ENCODE measurements at regions of chr2 and their contacts with region 1.

Region 1: DNA sequence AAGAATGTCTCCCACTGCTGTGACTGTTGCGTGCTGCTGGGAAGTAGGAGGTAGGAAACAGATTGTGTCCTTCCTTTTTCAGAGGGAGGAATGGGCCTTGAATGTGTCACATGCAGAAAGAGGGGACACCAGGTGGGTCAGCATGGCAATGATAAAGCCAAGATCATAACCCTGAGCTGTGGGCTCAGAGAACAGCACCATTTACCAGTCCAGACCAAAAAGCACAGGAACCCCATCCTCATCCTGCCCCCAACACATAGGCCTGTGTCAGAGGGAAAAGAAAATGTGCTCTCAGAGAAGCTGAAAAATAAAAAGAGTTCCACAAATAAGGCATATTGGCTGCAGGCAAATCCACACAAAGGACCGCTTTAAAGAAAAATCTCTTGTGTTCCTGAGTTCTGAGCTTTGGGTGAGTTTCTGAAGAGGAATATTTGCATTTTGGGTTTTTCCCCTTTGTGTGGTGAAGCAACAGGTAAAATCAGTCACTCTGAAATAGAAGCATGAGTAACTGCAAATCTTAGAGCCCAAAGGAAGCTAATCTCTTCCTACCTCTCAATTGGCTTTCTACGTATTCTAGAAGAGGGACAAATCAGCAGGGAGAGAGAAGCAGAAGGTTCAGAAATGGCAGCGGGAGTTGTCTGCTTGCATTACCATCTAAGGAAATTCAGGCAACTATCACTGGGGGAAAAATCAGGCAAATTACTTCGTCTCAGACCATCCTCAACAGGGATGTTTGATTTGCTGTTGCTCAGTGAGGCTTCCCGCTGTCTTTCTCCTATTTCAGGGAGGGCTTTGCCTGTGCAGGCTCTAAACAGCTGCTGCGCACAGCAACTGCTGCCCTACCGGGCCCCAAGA is 106.8 kb downstream of the BCL11A start:
- DNase-seq: no peak
- ATAC-seq: peak; percentile 78
- H3K4me3 Mint-ChIP-seq: peak overlapping the region; percentile 78
- H3K27ac Mint-ChIP-seq: peak overlapping the region; percentile 98
- H3K4me1 Mint-ChIP-seq: peaks cover 90% of the 10 kb centered on the region
- H3K27me3 Mint-ChIP-seq: no peaks in the 10 kb centered on the region
- CTCF ChIP-seq: no peak

Region 2: GRCh38 chr2:59413751-59414570 is 1032.7 kb before region 1 on chr2:
- CTCF ChIA-PET with region 1: no interaction called
- POLR2A ChIA-PET with region 1: no interaction called
- intact Hi-C with region 1: no loop called
- DNase-seq: no peak
- ATAC-seq: peak; percentile 31
- H3K4me3 Mint-ChIP-seq: no peak overlapping the region
- H3K27ac Mint-ChIP-seq: no peak overlapping the region
- H3K4me1 Mint-ChIP-seq: peaks cover 8% of the 10 kb centered on the region
- H3K27me3 Mint-ChIP-seq: peaks cover 23% of the 10 kb centered on the region
- CTCF ChIP-seq: no peak

Region 3: DNA sequence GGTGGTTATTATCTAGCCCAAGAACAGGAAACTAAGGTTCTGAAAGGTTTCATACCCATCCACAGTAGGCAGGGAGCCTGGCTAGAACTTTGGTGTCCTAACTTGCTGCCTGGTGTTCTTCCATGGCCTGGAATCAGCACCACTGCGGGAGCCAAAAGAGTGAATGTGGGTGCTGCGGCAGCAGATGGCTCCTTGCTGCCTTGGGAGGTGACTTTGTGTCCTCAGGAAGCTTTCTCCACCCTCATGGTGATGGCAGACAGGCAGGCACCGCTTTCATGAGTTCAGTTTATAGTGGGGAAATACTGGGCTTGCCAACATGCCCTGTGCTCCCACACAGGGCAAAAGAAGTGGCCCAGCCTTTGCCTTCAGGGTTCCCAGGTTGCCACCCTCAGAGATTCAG is 278.4 kb before region 1 on chr2:
- CTCF ChIA-PET with region 1: no interaction called
- POLR2A ChIA-PET with region 1: no interaction called
- intact Hi-C with region 1: no loop called
- DNase-seq: no peak
- ATAC-seq: no peak
- H3K4me3 Mint-ChIP-seq: no peak overlapping the region
- H3K27ac Mint-ChIP-seq: no peak overlapping the region
- H3K4me1 Mint-ChIP-seq: no peaks in the 10 kb centered on the region
- H3K27me3 Mint-ChIP-seq: no peaks in the 10 kb centered on the region
- CTCF ChIP-seq: no peak

Region 4: GRCh38 chr2:60337140-60337494 is 109.5 kb before region 1 on chr2:
- CTCF ChIA-PET with region 1: no interaction called
- POLR2A ChIA-PET with region 1: interaction called, 15 read pairs
- intact Hi-C with region 1: no loop called
- DNase-seq: no peak
- ATAC-seq: peak; percentile 80
- H3K4me3 Mint-ChIP-seq: peak overlapping the region; percentile 32
- H3K27ac Mint-ChIP-seq: peak overlapping the region; percentile 95
- H3K4me1 Mint-ChIP-seq: peaks cover 65% of the 10 kb centered on the region
- H3K27me3 Mint-ChIP-seq: no peaks in the 10 kb centered on the region
- CTCF ChIP-seq: no peak

Region 5: DNA sequence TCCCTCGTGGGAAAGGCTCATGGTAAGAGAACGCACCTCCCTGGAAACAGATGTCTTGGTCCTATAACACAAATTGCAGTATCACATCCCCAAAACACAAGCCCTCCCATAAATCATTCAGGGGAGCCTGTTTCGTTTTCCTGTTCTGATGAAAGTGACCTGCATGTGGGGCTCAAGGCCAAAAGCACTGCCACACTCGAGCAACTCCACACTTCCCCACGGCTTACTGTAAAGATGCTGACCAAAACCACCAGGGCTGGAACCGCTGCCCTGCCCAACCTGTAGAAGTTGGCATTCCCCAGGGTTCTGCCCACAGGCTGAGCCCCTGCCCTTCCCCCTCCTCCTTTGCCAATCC is 32.8 kb before region 1 on chr2:
- CTCF ChIA-PET with region 1: interaction called, 3 read pairs
- POLR2A ChIA-PET with region 1: interaction called, 34 read pairs
- intact Hi-C with region 1: loop called (anchors 1 kb)
- DNase-seq: peak; percentile 41
- ATAC-seq: peak; percentile 72
- H3K4me3 Mint-ChIP-seq: peak overlapping the region; percentile 8
- H3K27ac Mint-ChIP-seq: peak overlapping the region; percentile 90
- H3K4me1 Mint-ChIP-seq: peaks cover 87% of the 10 kb centered on the region
- H3K27me3 Mint-ChIP-seq: no peaks in the 10 kb centered on the region
- CTCF ChIP-seq: no peak

Region 6: DNA sequence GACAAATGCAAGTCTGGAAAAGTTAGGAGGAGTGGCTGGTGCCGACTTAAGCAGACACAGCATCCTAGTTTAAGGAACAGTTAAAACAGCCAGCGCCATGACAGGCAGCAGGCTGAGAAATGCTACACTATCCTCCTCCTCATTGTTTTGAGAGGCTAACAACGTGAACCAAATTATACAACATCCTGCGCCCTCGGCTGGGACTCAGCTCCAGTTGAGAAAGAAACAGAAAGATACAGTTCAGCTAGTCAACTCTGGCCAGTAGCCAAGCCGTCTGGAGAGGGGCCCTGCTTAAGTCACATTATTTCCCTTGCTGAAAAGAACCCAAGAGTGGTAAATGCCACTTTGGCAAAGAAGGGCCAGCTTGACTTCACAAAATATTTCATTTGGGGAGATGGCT is 16.6 kb after region 1 on chr2:
- CTCF ChIA-PET with region 1: no interaction called
- POLR2A ChIA-PET with region 1: interaction called, 4 read pairs
- intact Hi-C with region 1: loop called (anchors 1 kb)
- DNase-seq: no peak
- ATAC-seq: no peak
- H3K4me3 Mint-ChIP-seq: no peak overlapping the region
- H3K27ac Mint-ChIP-seq: peak overlapping the region; percentile 83
- H3K4me1 Mint-ChIP-seq: peaks cover 54% of the 10 kb centered on the region
- H3K27me3 Mint-ChIP-seq: no peaks in the 10 kb centered on the region
- CTCF ChIP-seq: no peak

Region 7: DNA sequence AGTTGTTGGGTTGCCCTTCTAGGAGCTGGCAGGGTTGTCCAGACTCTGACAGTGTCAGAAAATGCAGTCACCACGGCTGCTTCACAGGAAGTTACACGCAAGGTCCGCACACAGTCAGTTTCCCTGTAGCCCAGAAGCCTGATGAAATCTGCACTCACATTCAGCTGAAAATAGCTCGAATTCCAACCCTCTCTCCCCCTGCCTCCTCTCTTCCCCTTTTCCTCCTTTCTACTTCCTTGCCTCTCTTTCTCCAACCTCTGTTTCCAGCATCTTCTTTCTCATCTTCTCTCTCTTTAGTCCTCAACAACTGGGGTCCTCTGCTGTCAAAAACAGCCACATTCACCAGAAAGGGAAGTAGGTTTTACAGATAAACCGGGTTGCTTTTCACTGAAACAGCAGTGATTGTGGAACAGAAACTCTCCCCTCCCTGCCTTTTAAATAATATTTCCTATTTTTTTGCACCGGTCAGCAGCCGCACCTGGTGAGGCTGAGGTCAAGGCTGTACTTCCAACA is 37.5 kb after region 1 on chr2:
- CTCF ChIA-PET with region 1: no interaction called
- POLR2A ChIA-PET with region 1: interaction called, 25 read pairs
- intact Hi-C with region 1: loop called (anchors 1 kb)
- DNase-seq: no peak
- ATAC-seq: peak; percentile 66
- H3K4me3 Mint-ChIP-seq: peak overlapping the region; percentile 78
- H3K27ac Mint-ChIP-seq: peak overlapping the region; percentile 93
- H3K4me1 Mint-ChIP-seq: peaks cover 96% of the 10 kb centered on the region
- H3K27me3 Mint-ChIP-seq: no peaks in the 10 kb centered on the region
- CTCF ChIP-seq: no peak

Region 8: DNA sequence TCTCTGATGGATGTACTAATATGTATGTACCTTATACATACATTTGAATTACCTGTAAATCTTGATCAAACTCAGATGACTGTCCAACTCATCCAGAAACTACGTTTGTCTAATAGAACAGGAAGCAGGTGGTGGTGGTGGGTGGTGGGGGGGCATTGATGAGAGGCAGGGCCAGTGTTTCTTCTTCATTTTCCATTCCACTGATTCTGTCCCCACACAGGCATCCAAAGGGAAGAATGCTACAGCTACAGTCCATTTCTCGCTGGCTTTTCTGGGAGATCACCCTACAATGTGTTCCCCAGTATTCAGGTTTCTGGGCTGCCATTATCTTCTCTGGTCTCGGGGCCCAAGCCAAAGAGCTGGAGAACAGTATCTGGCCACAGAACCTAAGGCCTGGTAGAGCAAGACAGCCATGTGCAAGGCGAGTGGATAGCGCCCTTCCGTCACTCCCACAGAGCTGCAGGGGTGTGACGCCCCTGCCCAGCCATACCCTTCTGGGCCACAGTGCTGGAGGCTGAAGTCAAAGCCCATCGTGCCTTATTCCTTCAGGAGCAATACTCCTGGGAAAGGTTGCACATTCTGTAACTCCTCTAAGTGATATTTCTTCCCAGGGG is 52.3 kb after region 1 on chr2:
- CTCF ChIA-PET with region 1: interaction called, 3 read pairs
- POLR2A ChIA-PET with region 1: interaction called, 25 read pairs
- intact Hi-C with region 1: no loop called
- DNase-seq: peak; percentile 40
- ATAC-seq: peak; percentile 64
- H3K4me3 Mint-ChIP-seq: peak overlapping the region; percentile 64
- H3K27ac Mint-ChIP-seq: peak overlapping the region; percentile 84
- H3K4me1 Mint-ChIP-seq: peaks cover 99% of the 10 kb centered on the region
- H3K27me3 Mint-ChIP-seq: no peaks in the 10 kb centered on the region
- CTCF ChIP-seq: no peak

Region 9: DNA sequence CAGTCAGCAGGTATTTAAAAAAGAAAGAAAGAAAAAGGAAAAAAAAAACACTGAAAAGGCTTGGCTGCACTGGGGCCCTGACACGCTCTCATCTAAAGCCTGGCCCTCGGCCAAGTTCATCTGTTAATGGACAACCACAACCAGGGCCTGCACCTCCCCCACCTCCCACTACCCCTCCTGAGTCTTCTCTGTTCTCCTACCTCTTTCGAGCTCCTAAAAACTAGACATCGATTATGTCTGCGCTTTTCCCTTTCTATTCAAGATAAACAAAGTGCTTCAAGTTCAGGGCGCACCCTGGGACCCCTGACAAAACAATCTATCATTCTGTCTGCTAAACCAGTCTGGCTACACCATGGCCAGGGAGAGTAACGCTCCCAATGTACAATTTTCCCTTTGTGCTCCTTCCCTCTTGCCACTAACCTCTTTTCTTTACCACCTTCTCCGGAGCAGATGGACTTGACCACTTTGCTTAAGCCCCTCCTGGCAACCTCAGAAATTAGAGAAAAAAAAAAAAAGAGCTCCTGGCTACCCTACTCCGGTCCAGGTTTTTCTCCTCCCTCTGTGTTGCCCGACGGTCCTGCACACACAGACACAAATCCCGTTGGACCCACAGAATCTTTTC is 84.1 kb after region 1 on chr2:
- CTCF ChIA-PET with region 1: no interaction called
- POLR2A ChIA-PET with region 1: interaction called, 6 read pairs
- intact Hi-C with region 1: loop called (anchors 5 kb)
- DNase-seq: no peak
- ATAC-seq: peak; percentile 49
- H3K4me3 Mint-ChIP-seq: peak overlapping the region; percentile 81
- H3K27ac Mint-ChIP-seq: peak overlapping the region; percentile 84
- H3K4me1 Mint-ChIP-seq: peaks cover 100% of the 10 kb centered on the region
- H3K27me3 Mint-ChIP-seq: no peaks in the 10 kb centered on the region
- CTCF ChIP-seq: no peak

Region 10: DNA sequence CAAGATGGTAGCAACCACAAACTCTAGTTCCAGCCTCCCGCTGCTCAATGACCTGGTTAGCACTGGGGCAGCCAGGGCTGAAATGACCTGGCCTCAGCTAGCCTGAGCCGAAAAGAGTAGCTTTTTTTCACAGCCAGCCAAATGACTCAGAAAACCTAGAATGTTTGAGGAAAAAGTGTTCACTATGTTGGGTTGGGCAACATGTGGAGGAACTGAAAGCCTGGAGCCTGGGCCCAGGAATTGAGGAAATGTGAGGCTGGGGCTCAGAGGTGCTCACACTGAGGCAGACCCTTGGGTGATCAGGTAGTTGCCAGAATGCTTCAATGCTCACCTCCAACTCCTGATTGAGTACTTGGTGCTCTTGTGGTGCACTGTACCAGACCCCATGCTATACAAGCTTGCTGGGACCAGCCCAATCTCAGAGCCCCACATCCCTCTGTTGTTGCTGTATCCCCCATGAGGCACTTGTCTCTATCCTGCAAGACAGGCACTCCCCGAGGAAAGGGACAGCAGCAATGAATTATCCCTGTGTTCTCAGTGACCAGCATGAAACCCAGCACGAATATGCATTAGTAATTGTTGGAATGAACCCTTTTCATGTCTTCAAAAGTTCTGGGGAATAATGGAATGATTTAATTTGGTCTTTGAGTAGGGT is 908.0 kb after region 1 on chr2:
- CTCF ChIA-PET with region 1: no interaction called
- POLR2A ChIA-PET with region 1: no interaction called
- intact Hi-C with region 1: no loop called
- DNase-seq: no peak
- ATAC-seq: no peak
- H3K4me3 Mint-ChIP-seq: no peak overlapping the region
- H3K27ac Mint-ChIP-seq: no peak overlapping the region
- H3K4me1 Mint-ChIP-seq: peaks cover 11% of the 10 kb centered on the region
- H3K27me3 Mint-ChIP-seq: no peaks in the 10 kb centered on the region
- CTCF ChIP-seq: no peak

Measured in activated B cell treated with CpG ODN at 0.5 μM for 24 hours (primary cell).